ENCODE measurements at regions of chr2 and their contacts with region 1.

Region 1: GRCh38 chr2:221573430-221574230 is 1.5 kb upstream of the EPHA4 start:
- DNase-seq: peak; percentile 92 to 98
- H3K4me3 ChIP-seq: peak overlapping the region; percentile 60
- H3K4me3 Mint-ChIP-seq: peak overlapping the region; percentile 81
- H3K27ac Mint-ChIP-seq: peak overlapping the region; percentile 38
- H3K4me1 ChIP-seq: peaks cover 31% of the 10 kb centered on the region
- H3K4me1 Mint-ChIP-seq: peaks cover 46% of the 10 kb centered on the region
- H3K27me3 ChIP-seq: no peaks in the 10 kb centered on the region
- H3K27me3 Mint-ChIP-seq: no peaks in the 10 kb centered on the region
- CTCF ChIP-seq: peak; percentile 97 to 99

Region 2: DNA sequence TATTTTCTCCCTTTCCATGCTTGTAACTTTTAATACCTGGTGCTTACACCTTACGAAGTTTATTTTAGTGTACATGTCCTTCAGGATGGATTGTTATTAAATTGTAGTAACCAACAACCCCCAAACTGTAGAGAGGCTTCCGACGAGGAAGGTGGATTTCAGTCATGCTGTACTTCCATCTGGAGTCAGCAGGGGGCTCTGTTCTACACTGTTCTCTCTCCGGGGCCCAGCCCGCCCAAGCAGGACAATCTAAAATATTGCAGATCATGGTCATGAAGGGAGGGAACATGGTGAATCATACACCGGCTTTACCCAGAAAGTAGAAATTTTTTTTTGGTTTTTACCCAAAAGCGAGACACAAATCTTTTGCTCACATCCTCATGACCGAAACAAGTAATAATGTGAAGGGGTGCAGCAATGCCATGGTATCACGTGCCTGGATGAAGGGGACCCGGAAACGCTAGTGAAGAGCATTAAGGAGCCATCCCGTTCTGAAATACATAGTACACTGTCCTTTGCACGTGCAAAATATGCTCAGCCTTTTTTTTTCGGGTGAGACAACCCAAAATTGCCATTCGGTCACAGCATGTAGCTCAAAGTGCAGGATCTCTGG is 886.3 kb before region 1 on chr2:
- CTCF ChIA-PET with region 1: no interaction called
- POLR2A ChIA-PET with region 1: no interaction called
- intact Hi-C with region 1: loop called (anchors 1 kb)
- DNase-seq: peak; percentile 69 to 77
- H3K4me3 ChIP-seq: no peak overlapping the region
- H3K4me3 Mint-ChIP-seq: no peak overlapping the region
- H3K27ac Mint-ChIP-seq: no peak overlapping the region
- H3K4me1 ChIP-seq: no peaks in the 10 kb centered on the region
- H3K4me1 Mint-ChIP-seq: no peaks in the 10 kb centered on the region
- H3K27me3 ChIP-seq: no peaks in the 10 kb centered on the region
- H3K27me3 Mint-ChIP-seq: peaks cover 10% of the 10 kb centered on the region
- CTCF ChIP-seq: peak; percentile 92 to 98

Region 3: DNA sequence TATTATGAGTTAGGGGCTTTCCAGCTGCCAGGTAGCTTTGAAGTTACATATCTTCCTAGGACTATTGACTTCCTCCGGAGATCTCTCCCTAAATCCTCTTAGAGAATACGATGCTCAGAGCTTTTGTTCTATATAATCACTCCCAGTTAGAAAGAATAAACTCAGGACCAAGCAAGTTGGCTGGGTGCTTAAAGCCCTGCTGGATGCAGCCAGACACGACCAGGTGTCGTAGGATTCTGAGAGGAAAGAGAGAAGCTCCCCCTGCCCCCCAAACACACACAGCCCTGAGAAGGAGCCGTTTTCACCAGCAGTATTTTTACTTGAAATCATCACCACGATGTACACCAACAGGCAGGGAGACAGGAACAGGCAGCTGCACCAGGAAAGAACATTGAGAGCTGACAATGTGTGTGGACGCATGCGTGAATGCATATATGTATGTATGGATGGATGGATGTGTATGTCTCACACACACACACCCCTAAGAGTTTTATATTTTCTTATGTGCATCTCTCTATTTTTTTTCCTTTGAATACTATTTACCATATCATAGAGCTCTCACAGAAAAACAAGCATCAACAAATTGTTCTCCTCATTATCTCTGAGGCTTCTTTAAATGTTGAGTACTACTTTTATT is 384.1 kb before region 1 on chr2:
- CTCF ChIA-PET with region 1: no interaction called
- POLR2A ChIA-PET with region 1: interaction called, 3 read pairs
- intact Hi-C with region 1: loop called (anchors 5 kb)
- DNase-seq: peak; percentile 50 to 52
- H3K4me3 ChIP-seq: no peak overlapping the region
- H3K4me3 Mint-ChIP-seq: peak overlapping the region; percentile 5
- H3K27ac Mint-ChIP-seq: no peak overlapping the region
- H3K4me1 ChIP-seq: peaks cover 12% of the 10 kb centered on the region; the same call in 1 of the 2 replicates
- H3K4me1 Mint-ChIP-seq: peaks cover 17% of the 10 kb centered on the region
- H3K27me3 ChIP-seq: no peaks in the 10 kb centered on the region
- H3K27me3 Mint-ChIP-seq: no peaks in the 10 kb centered on the region
- CTCF ChIP-seq: no peak

Region 4: GRCh38 chr2:221372159-221372884 is 201.3 kb before region 1 on chr2:
- CTCF ChIA-PET with region 1: no interaction called
- POLR2A ChIA-PET with region 1: no interaction called
- intact Hi-C with region 1: loop called (anchors 2 kb)
- DNase-seq: no peak
- H3K4me3 ChIP-seq: no peak overlapping the region
- H3K4me3 Mint-ChIP-seq: no peak overlapping the region
- H3K27ac Mint-ChIP-seq: no peak overlapping the region
- H3K4me1 ChIP-seq: no peaks in the 10 kb centered on the region
- H3K4me1 Mint-ChIP-seq: no peaks in the 10 kb centered on the region
- H3K27me3 ChIP-seq: no peaks in the 10 kb centered on the region; the same call in 1 of the 2 replicates
- H3K27me3 Mint-ChIP-seq: no peaks in the 10 kb centered on the region
- CTCF ChIP-seq: peak; percentile 18 to 39

Region 5: GRCh38 chr2:221478485-221478863 is 95.2 kb before region 1 on chr2:
- CTCF ChIA-PET with region 1: interaction called, 6 read pairs
- POLR2A ChIA-PET with region 1: no interaction called
- intact Hi-C with region 1: loop called (anchors 1 kb)
- DNase-seq: peak in 1 of 2 experiments; percentile 25
- H3K4me3 ChIP-seq: no peak overlapping the region
- H3K4me3 Mint-ChIP-seq: no peak overlapping the region
- H3K27ac Mint-ChIP-seq: no peak overlapping the region
- H3K4me1 ChIP-seq: peaks cover 6% of the 10 kb centered on the region; the same call in 1 of the 2 replicates
- H3K4me1 Mint-ChIP-seq: peaks cover 6% of the 10 kb centered on the region
- H3K27me3 ChIP-seq: no peaks in the 10 kb centered on the region
- H3K27me3 Mint-ChIP-seq: no peaks in the 10 kb centered on the region
- CTCF ChIP-seq: peak; percentile 24 to 31

Region 6: GRCh38 chr2:221517696-221518151 is 55.9 kb before region 1 on chr2:
- CTCF ChIA-PET with region 1: no interaction called
- POLR2A ChIA-PET with region 1: no interaction called
- intact Hi-C with region 1: no loop called
- DNase-seq: no peak
- H3K4me3 ChIP-seq: no peak overlapping the region
- H3K4me3 Mint-ChIP-seq: no peak overlapping the region
- H3K27ac Mint-ChIP-seq: no peak overlapping the region
- H3K4me1 ChIP-seq: peaks cover 43% of the 10 kb centered on the region
- H3K4me1 Mint-ChIP-seq: peaks cover 8% of the 10 kb centered on the region
- H3K27me3 ChIP-seq: no peaks in the 10 kb centered on the region
- H3K27me3 Mint-ChIP-seq: no peaks in the 10 kb centered on the region
- CTCF ChIP-seq: no peak

Region 7: GRCh38 chr2:221554769-221555493 is 18.7 kb before region 1 on chr2:
- CTCF ChIA-PET with region 1: no interaction called
- POLR2A ChIA-PET with region 1: interaction called, 3 read pairs
- intact Hi-C with region 1: loop called (anchors 1 kb)
- DNase-seq: peak; percentile 60 to 70
- H3K4me3 ChIP-seq: no peak overlapping the region
- H3K4me3 Mint-ChIP-seq: peak overlapping the region; percentile 65
- H3K27ac Mint-ChIP-seq: peak overlapping the region; percentile 84
- H3K4me1 ChIP-seq: peaks cover 60% of the 10 kb centered on the region
- H3K4me1 Mint-ChIP-seq: peaks cover 61% of the 10 kb centered on the region
- H3K27me3 ChIP-seq: no peaks in the 10 kb centered on the region
- H3K27me3 Mint-ChIP-seq: no peaks in the 10 kb centered on the region
- CTCF ChIP-seq: no peak

Region 8: DNA sequence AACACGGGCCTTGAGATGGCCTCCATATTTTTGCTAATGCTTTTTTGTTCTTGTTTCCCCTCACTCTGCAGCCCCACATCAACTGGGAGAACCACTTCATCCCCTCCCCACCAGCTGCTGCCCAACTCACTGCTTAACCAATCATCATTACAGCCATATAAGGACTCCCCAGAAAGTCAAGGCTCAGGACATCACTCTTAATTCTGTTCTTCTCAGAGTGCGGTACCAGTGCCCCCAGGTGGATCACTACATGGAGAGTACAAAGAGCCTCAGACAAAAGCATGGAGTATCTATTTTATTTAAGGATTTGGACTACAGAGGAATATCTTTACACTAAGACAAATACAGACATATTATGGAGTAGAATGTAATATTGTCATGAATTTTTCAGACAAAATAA is 384.6 kb after region 1 on chr2:
- CTCF ChIA-PET with region 1: no interaction called
- POLR2A ChIA-PET with region 1: no interaction called
- intact Hi-C with region 1: loop called (anchors 1 kb)
- DNase-seq: peak; percentile 49 to 52
- H3K4me3 ChIP-seq: no peak overlapping the region
- H3K4me3 Mint-ChIP-seq: no peak overlapping the region
- H3K27ac Mint-ChIP-seq: no peak overlapping the region
- H3K4me1 ChIP-seq: no peaks in the 10 kb centered on the region
- H3K4me1 Mint-ChIP-seq: no peaks in the 10 kb centered on the region
- H3K27me3 ChIP-seq: no peaks in the 10 kb centered on the region
- H3K27me3 Mint-ChIP-seq: no peaks in the 10 kb centered on the region
- CTCF ChIP-seq: peak; percentile 29 to 36

Measured in Caco-2 (cell line).